ENCODE measurements at regions of chr10 and their contacts with region 1.

Region 1: GRCh38 chr10:8404391-8405120 is 350.1 kb downstream of the GATA3 start:
- DNase-seq: peak in 7 of 9 donors; percentile 78 to 93 (median 89)
- ATAC-seq: peak; percentile 85
- H3K4me3 ChIP-seq: peak overlapping the region; percentile 47
- H3K4me3 Mint-ChIP-seq: peak overlapping the region; percentile 30 to 88 (median 76)
- H3K27ac ChIP-seq: peak overlapping the region; percentile 74
- H3K27ac Mint-ChIP-seq: peak overlapping the region; percentile 86 to 98 (median 93)
- H3K4me1 ChIP-seq: peaks cover 59 to 60% of the 10 kb centered on the region in 2 donors
- H3K4me1 Mint-ChIP-seq: peaks cover 35 to 78% (median 73%) of the 10 kb centered on the region in 7 donors
- H3K27me3 ChIP-seq: no peaks in the 10 kb centered on the region
- H3K27me3 Mint-ChIP-seq: peaks cover 0 to 10% (median 0%) of the 10 kb centered on the region in 5 donors

Region 2: DNA sequence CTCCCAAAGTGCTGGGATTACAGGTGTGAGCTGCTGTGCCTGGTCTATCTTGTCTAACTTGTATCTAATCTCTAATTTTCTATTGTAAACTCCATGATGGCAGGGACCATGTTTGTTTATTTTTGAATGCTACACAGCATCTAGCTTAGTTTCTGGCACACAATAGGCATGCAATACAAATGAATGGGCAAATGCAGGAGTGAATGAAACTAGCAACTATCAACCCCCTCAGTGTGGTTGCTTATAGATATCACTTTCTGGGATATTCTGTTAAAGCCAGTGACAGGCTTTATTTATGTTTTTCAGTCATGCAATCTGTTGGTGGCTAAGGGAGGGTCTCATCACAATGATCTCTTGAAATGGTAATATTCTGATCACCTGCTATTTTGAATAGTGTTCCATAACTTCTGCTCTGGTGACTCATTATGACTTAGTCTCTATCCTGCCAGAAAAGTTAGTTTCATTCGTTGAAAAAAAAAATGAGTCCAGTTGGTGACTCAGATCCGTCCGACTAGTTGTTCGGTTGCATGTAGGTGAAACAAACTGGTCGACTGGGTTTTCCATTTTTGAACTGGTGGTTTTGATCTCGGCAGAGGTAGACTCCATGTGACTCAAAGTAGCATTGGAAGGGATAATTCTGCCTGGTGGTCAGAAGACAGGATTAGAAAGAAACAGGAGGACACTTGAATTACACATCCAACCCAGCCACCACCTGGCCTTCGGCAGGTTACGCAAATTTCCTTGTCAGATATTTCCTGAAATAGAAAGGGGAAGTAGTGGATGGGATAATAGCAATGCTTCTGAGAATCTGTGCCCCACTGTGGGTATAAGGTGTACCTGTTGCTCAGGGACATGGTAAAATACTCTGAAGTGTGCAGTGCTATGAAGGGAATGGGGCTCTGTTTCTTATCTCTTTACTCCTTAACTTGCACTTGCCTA is 273.3 kb before region 1 on chr10:
- CTCF ChIA-PET with region 1: no interaction called
- POLR2A ChIA-PET with region 1: no interaction called
- intact Hi-C with region 1: loop called in 1 of 2 experiments (anchors 1 kb)
- DNase-seq: peak in 1 of 9 donors; percentile 56
- ATAC-seq: no peak
- H3K4me3 ChIP-seq: no peak overlapping the region
- H3K4me3 Mint-ChIP-seq: peak overlapping the region in 1 of 10 donors; percentile 53
- H3K27ac ChIP-seq: no peak overlapping the region
- H3K27ac Mint-ChIP-seq: peak overlapping the region in 1 of 9 donors; percentile 73
- H3K4me1 ChIP-seq: peaks cover 0 to 2% of the 10 kb centered on the region in 2 donors
- H3K4me1 Mint-ChIP-seq: peaks cover 4 to 47% (median 14%) of the 10 kb centered on the region in 7 donors
- H3K27me3 ChIP-seq: no peaks in the 10 kb centered on the region
- H3K27me3 Mint-ChIP-seq: peaks cover 1 to 16% (median 10%) of the 10 kb centered on the region in 5 donors

Region 3: GRCh38 chr10:8331883-8332729 is 72.5 kb before region 1 on chr10:
- CTCF ChIA-PET with region 1: no interaction called
- POLR2A ChIA-PET with region 1: interaction called, 5 read pairs
- intact Hi-C with region 1: loop called (anchors 1 kb)
- DNase-seq: peak; percentile 78 to 96 (median 93)
- ATAC-seq: peak; percentile 97
- H3K4me3 ChIP-seq: peak overlapping the region; percentile 71
- H3K4me3 Mint-ChIP-seq: peak overlapping the region; percentile 65 to 92 (median 84)
- H3K27ac ChIP-seq: peak overlapping the region; percentile 83
- H3K27ac Mint-ChIP-seq: peak overlapping the region; percentile 88 to 97 (median 93)
- H3K4me1 ChIP-seq: peaks cover 9 to 23% of the 10 kb centered on the region in 2 donors
- H3K4me1 Mint-ChIP-seq: peaks cover 21 to 53% (median 40%) of the 10 kb centered on the region in 7 donors
- H3K27me3 ChIP-seq: no peaks in the 10 kb centered on the region
- H3K27me3 Mint-ChIP-seq: peaks cover 0 to 10% (median 0%) of the 10 kb centered on the region in 5 donors

Region 4: DNA sequence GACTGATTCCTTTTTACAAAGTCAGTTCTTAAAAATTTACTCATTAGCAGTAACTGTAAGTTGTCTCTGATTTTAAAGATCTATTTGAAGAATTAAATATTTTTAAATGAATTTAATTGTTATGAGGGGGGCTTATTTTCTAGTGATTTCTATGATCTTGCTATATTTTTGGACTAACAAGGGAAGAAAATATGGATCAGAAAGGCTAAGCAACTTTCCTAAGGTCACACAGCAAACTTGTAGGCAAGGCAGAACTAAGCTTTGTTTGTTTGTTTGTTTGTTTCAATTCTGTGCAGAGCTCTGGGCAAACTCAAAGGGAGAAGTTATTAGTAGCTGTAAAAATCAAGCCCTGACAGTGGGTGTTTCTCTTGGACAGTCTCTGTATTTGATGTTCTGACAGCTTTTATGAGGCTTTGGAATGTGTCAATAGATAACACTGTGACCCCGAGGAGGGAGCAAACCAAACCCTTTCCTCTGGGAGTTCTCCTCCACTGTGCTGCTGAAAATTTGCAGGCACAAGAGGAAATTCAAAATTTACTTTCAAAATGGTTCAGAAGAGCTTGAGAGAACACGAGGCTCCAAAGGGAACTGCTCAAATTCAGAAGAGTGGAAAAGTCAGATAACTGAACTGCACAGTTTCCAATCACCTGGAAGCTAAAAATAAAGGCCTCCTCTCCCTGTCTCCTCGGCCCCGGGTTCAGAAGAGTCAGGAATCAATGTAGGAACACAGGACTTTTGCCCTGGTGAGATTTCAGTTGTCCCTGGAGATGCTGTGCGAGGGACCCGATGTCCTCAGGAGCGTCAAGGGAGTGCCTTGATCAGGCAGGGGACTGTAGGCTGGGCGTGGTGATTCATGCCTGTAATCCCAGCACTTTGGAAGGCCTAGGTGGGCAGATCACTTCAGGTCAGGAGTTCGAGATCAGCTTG is 24.4 kb before region 1 on chr10:
- CTCF ChIA-PET with region 1: no interaction called
- POLR2A ChIA-PET with region 1: interaction called, 3 read pairs
- intact Hi-C with region 1: loop called in 1 of 2 experiments (anchors 2 kb)
- DNase-seq: no peak
- ATAC-seq: no peak
- H3K4me3 ChIP-seq: no peak overlapping the region
- H3K4me3 Mint-ChIP-seq: no peak overlapping the region
- H3K27ac ChIP-seq: no peak overlapping the region
- H3K27ac Mint-ChIP-seq: peak overlapping the region in 2 of 9 donors; percentile 53 to 72
- H3K4me1 ChIP-seq: no peaks in the 10 kb centered on the region
- H3K4me1 Mint-ChIP-seq: peaks cover 0 to 11% (median 0%) of the 10 kb centered on the region in 7 donors
- H3K27me3 ChIP-seq: peaks cover 0 to 3% of the 10 kb centered on the region in 2 donors
- H3K27me3 Mint-ChIP-seq: peaks cover 0 to 14% (median 0%) of the 10 kb centered on the region in 5 donors

Region 5: GRCh38 chr10:8444630-8445029 is 40.1 kb after region 1 on chr10:
- CTCF ChIA-PET with region 1: interaction called, 5 read pairs
- POLR2A ChIA-PET with region 1: no interaction called
- intact Hi-C with region 1: loop called (anchors 1 to 5 kb)
- DNase-seq: peak in 8 of 9 donors; percentile 14 to 63 (median 44)
- ATAC-seq: peak; percentile 94
- H3K4me3 ChIP-seq: no peak overlapping the region
- H3K4me3 Mint-ChIP-seq: no peak overlapping the region
- H3K27ac ChIP-seq: no peak overlapping the region
- H3K27ac Mint-ChIP-seq: peak overlapping the region in 3 of 9 donors; percentile 23 to 70 (median 65)
- H3K4me1 ChIP-seq: peaks cover 0 to 6% of the 10 kb centered on the region in 2 donors
- H3K4me1 Mint-ChIP-seq: peaks cover 0 to 17% (median 5%) of the 10 kb centered on the region in 7 donors
- H3K27me3 ChIP-seq: peaks cover 0 to 2% of the 10 kb centered on the region in 2 donors
- H3K27me3 Mint-ChIP-seq: peaks cover 0 to 36% (median 0%) of the 10 kb centered on the region in 5 donors

Region 6: GRCh38 chr10:8463853-8464252 is 59.3 kb after region 1 on chr10:
- CTCF ChIA-PET with region 1: no interaction called
- POLR2A ChIA-PET with region 1: no interaction called
- intact Hi-C with region 1: no loop called
- DNase-seq: no peak
- ATAC-seq: no peak
- H3K4me3 ChIP-seq: no peak overlapping the region
- H3K4me3 Mint-ChIP-seq: no peak overlapping the region
- H3K27ac ChIP-seq: no peak overlapping the region
- H3K27ac Mint-ChIP-seq: no peak overlapping the region
- H3K4me1 ChIP-seq: no peaks in the 10 kb centered on the region
- H3K4me1 Mint-ChIP-seq: peaks cover 0 to 2% (median 0%) of the 10 kb centered on the region in 7 donors
- H3K27me3 ChIP-seq: no peaks in the 10 kb centered on the region
- H3K27me3 Mint-ChIP-seq: peaks cover 9 to 40% (median 20%) of the 10 kb centered on the region in 5 donors

Region 7: DNA sequence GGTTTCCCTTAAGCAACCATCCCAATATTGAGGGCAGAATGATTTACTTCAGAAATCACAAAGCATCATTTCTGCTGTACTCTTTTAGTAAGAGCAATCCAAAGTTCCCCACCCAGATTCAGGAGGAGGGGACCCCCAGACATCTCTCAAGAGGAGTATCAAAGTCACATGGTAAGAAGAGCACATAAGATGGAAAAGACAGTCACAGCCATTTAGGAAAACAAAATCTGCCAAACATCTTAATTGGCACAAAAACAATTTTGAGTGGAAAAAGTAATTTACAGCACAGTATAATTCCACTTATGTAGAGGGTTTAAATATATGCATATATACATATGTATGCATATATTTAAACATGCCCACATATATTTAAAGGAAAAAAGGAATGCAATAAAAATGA is 1284.2 kb after region 1 on chr10:
- CTCF ChIA-PET with region 1: no interaction called
- POLR2A ChIA-PET with region 1: no interaction called
- intact Hi-C with region 1: no loop called
- DNase-seq: no peak
- ATAC-seq: no peak
- H3K4me3 ChIP-seq: no peak overlapping the region
- H3K4me3 Mint-ChIP-seq: no peak overlapping the region
- H3K27ac ChIP-seq: no peak overlapping the region
- H3K27ac Mint-ChIP-seq: no peak overlapping the region
- H3K4me1 ChIP-seq: no peaks in the 10 kb centered on the region
- H3K4me1 Mint-ChIP-seq: no peaks in the 10 kb centered on the region
- H3K27me3 ChIP-seq: no peaks in the 10 kb centered on the region
- H3K27me3 Mint-ChIP-seq: peaks cover 0 to 4% (median 4%) of the 10 kb centered on the region in 5 donors

Measured in naive thymus-derived CD4-positive, alpha-beta T cell (primary cell).